GM18951 (cell line): ENCODE measurements at regions of chr16 and their contacts with region 1.

Region 1: DNA sequence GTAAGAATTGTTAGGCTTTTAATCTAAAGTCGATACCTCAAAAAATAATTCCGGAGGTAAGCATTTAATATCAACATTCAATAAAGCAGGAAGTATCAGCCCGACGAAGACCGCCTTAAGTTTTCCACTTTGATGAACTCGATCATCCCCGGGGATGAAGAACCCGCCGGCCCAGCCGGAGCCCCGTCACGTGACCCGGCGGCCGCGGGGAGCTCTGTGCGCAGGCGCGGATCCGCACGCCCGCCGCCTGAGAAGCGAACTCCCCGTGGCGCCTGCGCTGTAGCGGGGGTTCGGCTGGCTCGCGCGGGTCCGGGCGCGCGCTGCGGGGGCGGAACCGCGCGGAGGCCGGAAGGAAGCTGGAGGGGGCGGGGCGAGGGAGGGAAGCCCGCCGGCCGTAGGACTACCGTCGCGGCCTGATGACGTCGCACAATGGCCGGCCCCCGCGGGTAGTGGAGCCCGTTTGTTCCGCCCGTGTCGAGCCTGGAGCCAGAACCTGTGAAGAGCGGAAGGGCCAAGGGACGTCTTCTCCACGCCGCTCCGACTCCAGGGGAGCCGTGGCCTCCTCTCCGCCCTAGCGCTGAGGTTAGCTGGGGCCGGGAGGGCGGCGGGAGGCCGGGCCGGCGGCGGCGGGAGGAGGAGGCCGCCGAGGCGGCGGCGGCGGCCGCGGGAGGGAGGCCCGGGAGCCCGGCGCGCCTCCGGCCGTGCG is at the start of gene ZC3H18:
- POLR2A ChIP-seq: peak; percentile 87

Region 2: GRCh38 chr16:88194397-88195268 is 375.5 kb before region 1 on chr16:
- in situ Hi-C with region 1: loop called (anchors 25 kb)
- POLR2A ChIP-seq: no peak

Region 3: DNA sequence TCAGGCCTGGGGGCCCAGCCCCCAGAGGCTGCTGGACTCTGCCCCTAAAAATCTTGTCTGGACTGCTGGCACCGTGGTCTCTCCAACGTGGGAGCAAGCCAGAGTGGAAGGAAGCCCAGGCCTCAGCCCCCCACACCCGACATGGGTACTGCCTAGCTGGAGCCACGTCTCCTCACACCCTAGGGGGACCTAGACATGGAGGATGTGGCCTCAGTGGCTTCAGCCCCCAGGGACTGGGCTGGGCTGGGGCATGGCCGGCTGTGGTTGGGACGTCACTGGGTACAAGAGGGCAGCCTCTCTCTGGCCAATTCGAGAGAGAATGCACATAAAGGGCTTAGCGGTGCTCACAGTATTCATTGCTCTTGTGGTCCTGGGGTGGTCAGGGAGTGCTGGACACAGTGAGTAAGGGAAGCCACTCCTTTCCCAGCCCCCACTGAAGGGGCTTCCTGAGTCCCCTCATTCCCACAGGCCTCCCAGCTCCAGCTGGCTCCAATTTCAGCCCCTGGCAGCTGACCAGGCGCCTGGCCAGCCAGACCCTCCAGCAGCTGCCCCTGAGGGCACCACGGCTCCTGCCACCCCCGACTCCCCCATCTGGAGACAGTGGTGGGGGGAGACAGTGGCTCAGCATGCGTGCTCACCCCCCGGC is 602.5 kb after region 1 on chr16:
- in situ Hi-C with region 1: no loop called
- POLR2A ChIP-seq: no peak